Left cardiac atrium (tissue), 4 donors: ENCODE measurements at regions of chr9 and their contacts with region 1.

Region 1: DNA sequence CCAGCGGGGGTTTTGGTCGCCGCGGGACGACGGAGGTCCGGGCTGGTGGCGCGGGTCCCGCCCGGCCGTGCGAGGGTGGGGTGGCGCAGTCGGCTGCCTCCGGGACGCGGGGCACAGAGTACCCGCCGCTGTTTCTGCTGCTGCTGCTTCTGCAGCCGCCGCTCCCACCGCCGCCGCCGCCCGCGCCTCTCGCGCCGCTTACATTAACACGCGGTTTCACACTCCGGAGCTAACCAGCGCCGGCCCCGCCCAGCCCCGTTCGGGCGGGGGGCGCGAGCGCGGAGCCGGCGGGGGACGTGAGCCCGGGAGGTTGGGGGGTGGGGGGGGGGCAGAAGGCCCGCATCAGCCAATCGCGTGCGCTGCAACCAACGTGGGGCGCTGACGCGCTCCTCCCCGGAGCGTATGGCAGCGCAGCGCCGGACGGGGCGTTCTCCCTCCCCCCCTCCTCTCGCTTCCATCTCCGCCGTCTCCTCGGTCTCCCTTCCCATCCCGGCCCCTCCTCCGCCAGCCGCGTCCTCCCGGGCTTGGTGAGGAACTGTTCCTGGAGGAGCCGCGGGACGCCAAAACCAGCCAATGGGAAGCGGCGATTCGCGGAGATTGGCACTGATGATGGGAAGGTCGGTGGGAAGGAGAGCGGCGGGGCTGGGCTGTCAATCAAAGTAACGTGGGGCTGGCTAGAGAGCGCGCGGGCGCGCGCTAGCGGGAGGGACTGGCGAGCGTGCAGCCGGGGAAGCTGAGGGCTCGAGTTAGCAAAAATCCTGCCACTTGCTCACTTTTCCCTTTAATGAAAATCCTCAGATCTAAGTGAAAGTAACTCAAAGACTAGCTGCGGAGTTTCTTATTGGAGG is at the start of gene TLE1:
- DNase-seq: peak; percentile 99
- ATAC-seq: peak; percentile 94 to 97
- total RNA-seq, gene TLE1: 15.0 to 15.2 TPM

Region 2: DNA sequence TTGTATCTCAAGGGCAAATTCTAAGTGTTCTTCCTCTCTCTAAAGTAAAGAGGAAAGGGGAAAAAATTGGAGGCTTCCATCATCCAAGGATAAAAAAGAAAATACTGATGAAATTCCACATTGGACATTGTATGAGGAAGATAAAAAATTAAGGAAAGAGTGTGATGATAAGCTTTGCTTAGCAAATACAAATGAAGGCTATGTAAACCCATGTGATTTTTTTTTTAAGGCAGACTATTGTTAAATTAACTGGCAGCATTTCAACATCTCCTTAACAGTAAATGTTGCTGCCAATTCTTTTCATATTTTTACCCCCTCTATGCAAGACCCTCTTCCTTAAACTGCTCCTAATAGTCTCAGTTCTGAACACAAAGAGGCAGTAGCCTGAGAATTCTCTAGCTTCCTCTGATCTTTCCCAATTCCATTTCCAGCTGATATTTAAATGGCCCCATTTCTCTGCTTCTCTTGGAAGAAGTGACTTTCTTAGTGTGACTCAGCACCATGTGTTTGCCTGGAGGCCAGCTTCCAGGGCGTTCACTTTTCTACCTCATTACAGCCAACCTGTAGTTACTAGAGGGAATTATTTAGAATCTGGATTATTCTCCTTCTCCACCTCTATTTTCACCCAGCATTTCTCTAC is 159.9 kb before region 1 on chr9:
- intact Hi-C with region 1: loop called in 1 of 2 experiments (anchors 10 kb)
- DNase-seq: peak; percentile 29
- ATAC-seq: peak in 1 of 2 donors; percentile 81

Region 3: GRCh38 chr9:81609782-81610739 is 79.5 kb before region 1 on chr9:
- intact Hi-C with region 1: loop called in 1 of 2 experiments (anchors 10 kb)
- DNase-seq: no peak
- ATAC-seq: peak in 1 of 2 donors; percentile 13

Region 4: DNA sequence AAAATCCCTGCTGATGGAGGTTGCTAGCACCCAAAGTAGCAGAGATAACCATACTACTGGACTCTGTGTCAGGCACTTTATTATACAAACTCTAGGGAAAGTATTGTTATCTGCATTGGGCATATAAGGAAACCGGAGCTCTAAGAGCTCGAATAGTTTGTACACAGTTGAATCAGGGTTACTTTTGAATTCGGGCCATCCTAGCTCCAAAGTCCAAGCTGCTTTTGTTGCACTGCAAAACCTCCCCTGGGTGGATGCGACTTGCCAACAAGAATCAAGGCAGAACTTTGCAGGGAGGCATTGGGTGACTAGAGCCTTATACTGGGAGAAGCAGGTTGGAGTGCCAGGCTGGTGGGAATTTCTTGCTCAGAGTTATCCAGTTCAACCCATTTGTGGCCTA is 734.1 kb after region 1 on chr9:
- intact Hi-C with region 1: no loop called
- DNase-seq: no peak
- ATAC-seq: no peak